Dendritic cell treated with granulocyte-macrophage colony-stimulating factor and Interleukin-4, amounts not matched to agents 40 ng/mL and 50 ng/mL, for 4 days (primary cell): ENCODE measurements at regions of chr11 and their contacts with region 1.

Region 1: GRCh38 chr11:117316197-117316961 is at the start of gene BACE1:
- H3K4me3 Mint-ChIP-seq: peak within 1 kb of the TSS; percentile 89
- H3K27ac Mint-ChIP-seq: peak within 1 kb of the TSS; percentile 24
- H3K4me1 Mint-ChIP-seq: peaks cover 29% of the 10 kb centered on the region
- H3K27me3 Mint-ChIP-seq: peaks cover 26% of the 10 kb centered on the region

Region 2: GRCh38 chr11:117232092-117232878 is 84.1 kb before region 1 on chr11 and contains the start of gene RNF214:
- intact Hi-C with region 1: loop called (anchors 5 kb)
- H3K4me3 Mint-ChIP-seq: peak within 1 kb of the TSS; percentile 94
- H3K27ac Mint-ChIP-seq: peak within 1 kb of the TSS; percentile 96
- H3K4me1 Mint-ChIP-seq: peaks cover 40% of the 10 kb centered on the region
- H3K27me3 Mint-ChIP-seq: no peaks in the 10 kb centered on the region

Region 3: GRCh38 chr11:117256573-117256972 is 59.8 kb before region 1 on chr11:
- intact Hi-C with region 1: no loop called
- H3K4me3 Mint-ChIP-seq: no peak overlapping the region
- H3K27ac Mint-ChIP-seq: no peak overlapping the region
- H3K4me1 Mint-ChIP-seq: no peaks in the 10 kb centered on the region
- H3K27me3 Mint-ChIP-seq: no peaks in the 10 kb centered on the region

Region 4: GRCh38 chr11:117547195-117547850 is 230.9 kb after region 1 on chr11:
- intact Hi-C with region 1: no loop called
- H3K4me3 Mint-ChIP-seq: no peak overlapping the region
- H3K27ac Mint-ChIP-seq: no peak overlapping the region
- H3K4me1 Mint-ChIP-seq: no peaks in the 10 kb centered on the region
- H3K27me3 Mint-ChIP-seq: peaks cover 4% of the 10 kb centered on the region